ENCODE measurements at regions of chr10 and their contacts with region 1.

Region 1: GRCh38 chr10:101012525-101013364 is 13.1 kb downstream of the LZTS2 start:
- DNase-seq: no peak
- H3K4me3 ChIP-seq: no peak overlapping the region
- CTCF ChIP-seq: peak; percentile 94

Region 2: GRCh38 chr10:101031128-101031795 is 18.5 kb after region 1 on chr10 and contains the starts of genes PDZD7 and SFXN3:
- CTCF ChIA-PET with region 1: interaction called, 333 read pairs
- POLR2A ChIA-PET with region 1: no interaction called
- DNase-seq: no peak
- H3K4me3 ChIP-seq: peak within 1 kb of the TSS; percentile 86
- CTCF ChIP-seq: no peak

Region 3: DNA sequence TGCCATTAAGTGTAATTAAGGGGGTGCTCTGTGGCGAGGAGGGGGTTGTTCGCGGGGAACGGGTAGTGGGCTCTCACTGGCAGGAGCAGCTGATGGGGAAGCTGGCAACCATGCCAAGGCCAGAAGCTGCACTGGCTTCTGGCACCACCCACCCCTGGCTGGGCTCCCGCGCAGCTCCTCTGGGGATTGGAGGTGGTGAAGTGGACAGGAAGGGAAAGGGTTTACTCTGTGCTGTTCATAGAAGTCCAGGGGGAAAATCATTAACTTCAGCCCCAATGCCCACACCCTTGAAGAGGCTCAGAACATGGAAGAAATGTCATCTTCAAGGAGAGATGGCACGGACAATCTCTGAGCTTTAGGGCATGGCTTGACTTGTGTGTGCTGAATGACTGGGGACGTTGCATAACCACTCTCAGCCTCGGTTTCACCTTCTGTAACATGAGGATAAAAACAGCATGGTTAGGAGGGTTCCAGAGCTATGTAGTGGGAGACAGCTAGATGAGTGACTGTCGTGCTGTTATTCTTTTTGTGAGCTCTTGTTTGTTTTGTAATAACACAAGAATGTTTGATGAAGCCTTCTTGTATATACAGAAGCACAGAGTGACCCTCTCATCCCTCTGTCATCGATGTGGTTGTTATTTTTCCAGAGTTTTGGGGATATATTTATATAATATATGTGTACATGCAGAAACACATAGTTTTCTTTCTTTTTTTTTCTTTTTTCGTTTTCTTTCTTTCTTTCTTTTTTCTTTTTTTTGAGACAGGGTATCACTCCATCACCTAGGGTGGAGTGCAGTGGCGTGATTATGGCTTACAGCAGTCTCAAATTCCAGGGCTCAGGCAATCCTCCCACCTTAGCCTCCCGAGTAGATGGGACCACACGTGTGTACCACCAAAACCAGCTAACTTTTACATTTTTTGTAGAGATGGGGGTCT is 79.1 kb after region 1 on chr10:
- CTCF ChIA-PET with region 1: no interaction called
- POLR2A ChIA-PET with region 1: no interaction called
- DNase-seq: no peak
- H3K4me3 ChIP-seq: no peak overlapping the region
- CTCF ChIP-seq: no peak

Region 4: GRCh38 chr10:101272229-101272868 is 259.6 kb after region 1 on chr10:
- CTCF ChIA-PET with region 1: no interaction called
- POLR2A ChIA-PET with region 1: no interaction called
- DNase-seq: no peak
- H3K4me3 ChIP-seq: no peak overlapping the region
- CTCF ChIP-seq: peak; percentile 82